ENCODE measurements at regions of chr5 and their contacts with region 1.

Region 1: GRCh38 chr5:179678223-179679013 is 2.4 kb downstream of the CBY3 start:
- DNase-seq: peak; percentile 98
- H3K4me3 ChIP-seq: peak overlapping the region; percentile 66 to 92 (median 80)
- H3K27ac ChIP-seq: peak overlapping the region; percentile 87 to 95 (median 92)
- H3K4me1 ChIP-seq: peaks cover 0 to 28% (median 22%) of the 10 kb centered on the region in 4 donors
- H3K27me3 ChIP-seq: no peaks in the 10 kb centered on the region
- CTCF ChIP-seq: no peak
- EP300 ChIP-seq: no peak
- POLR2A ChIP-seq: peak; percentile 93

Region 2: DNA sequence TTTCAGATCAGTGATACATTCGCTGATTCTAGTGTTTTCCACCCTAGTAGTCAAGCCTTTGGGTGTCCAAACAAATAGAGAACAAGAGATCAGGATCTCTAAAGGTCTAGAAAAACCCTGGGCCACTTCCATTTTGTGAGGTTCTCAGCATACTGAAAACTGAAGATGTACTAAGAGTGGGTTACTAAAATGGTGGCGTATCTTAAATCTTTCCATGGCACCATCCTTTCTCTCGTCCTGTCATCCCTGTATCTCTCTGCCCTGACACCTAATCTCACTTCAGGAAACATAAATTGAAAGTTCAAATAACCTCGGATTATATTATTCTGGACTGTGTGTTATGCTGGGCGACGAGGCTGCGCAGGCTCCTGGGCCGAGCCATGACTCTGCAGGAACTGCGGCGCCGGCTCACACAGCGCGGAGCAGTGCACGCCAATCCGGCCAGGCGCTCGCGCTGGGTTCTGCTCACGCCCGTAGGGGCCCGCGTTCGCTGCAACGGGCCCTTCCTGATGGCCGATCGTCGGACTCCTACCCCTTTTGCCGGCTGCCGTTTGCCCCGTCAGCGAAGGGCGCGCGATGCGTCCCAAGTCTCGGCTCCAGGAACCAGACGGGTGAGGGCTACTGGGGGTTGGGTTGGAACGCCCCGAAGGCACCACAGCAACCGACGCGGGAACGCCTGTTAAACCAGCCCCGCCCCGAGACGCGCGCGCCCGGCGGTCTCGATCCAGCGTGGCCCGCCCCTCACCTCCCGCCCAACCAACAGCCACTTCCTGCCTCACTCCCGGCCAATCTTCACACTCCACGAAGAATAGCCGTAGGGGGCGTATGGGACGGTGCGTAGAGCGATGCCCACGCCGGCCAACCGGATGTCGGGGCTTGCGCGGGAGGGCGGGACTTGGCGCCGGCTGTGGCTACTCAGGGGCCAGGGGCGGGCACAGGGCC is 19.8 kb after region 1 on chr5:
- intact Hi-C with region 1: loop called (anchors 1 kb)
- DNase-seq: peak; percentile 100
- H3K4me3 ChIP-seq: peak overlapping the region; percentile 70 to 92 (median 80)
- H3K27ac ChIP-seq: peak overlapping the region; percentile 93 to 98 (median 96)
- H3K4me1 ChIP-seq: peaks cover 0 to 53% (median 30%) of the 10 kb centered on the region in 4 donors
- H3K27me3 ChIP-seq: no peaks in the 10 kb centered on the region
- CTCF ChIP-seq: no peak
- EP300 ChIP-seq: no peak
- POLR2A ChIP-seq: peak; percentile 87 to 93

Region 3: DNA sequence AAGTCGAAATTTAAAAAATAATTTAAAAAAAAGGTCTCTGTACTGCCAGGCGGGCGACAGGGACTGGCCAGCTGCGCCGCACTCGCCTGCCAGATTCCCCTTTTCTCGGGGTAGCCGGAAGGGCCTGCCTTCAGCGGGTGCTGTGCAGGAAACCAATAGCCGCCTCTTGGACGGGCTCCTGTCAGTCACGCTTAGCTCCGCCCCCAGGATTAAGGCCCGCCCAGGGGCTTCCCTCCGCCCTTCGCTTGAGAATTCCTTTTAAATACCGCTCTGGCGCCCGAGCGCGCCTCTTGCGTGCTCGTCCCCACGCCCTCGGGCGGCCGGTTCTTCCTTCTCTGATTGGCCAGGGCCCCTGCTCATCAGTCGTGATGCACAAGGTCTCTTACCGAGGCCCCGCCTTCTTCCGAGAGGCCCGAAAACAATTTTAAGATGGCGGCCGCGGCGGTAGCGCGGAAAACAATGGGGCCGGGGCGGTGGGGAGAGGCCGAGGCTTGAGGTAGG is 54.0 kb after region 1 on chr5 and contains the start of gene MAML1:
- intact Hi-C with region 1: loop called (anchors 10 kb)
- DNase-seq: peak; percentile 100
- H3K4me3 ChIP-seq: peak within 1 kb of the TSS; percentile 62 to 91 (median 84)
- H3K27ac ChIP-seq: peak within 1 kb of the TSS; percentile 95 to 99 (median 96)
- H3K4me1 ChIP-seq: peaks cover 0 to 48% (median 43%) of the 10 kb centered on the region in 4 donors
- H3K27me3 ChIP-seq: no peaks in the 10 kb centered on the region
- CTCF ChIP-seq: no peak
- EP300 ChIP-seq: no peak
- POLR2A ChIP-seq: peak; percentile 25 to 30
- total RNA-seq, gene MAML1: 18.1 to 30.2 (median 25.9) TPM

Region 4: GRCh38 chr5:179795863-179796833 is 117.7 kb after region 1 on chr5:
- intact Hi-C with region 1: loop called (anchors 5 kb)
- DNase-seq: peak; percentile 87
- H3K4me3 ChIP-seq: peak overlapping the region; percentile 38 to 67 (median 63)
- H3K27ac ChIP-seq: peak overlapping the region; percentile 82 to 87 (median 84)
- H3K4me1 ChIP-seq: peaks cover 0 to 40% (median 33%) of the 10 kb centered on the region in 4 donors
- H3K27me3 ChIP-seq: no peaks in the 10 kb centered on the region
- CTCF ChIP-seq: peak; percentile 10 to 89 (median 26)
- EP300 ChIP-seq: no peak
- POLR2A ChIP-seq: peak; percentile 12 to 20